ENCODE measurements at regions of chr1 and their contacts with region 1.

Region 1: DNA sequence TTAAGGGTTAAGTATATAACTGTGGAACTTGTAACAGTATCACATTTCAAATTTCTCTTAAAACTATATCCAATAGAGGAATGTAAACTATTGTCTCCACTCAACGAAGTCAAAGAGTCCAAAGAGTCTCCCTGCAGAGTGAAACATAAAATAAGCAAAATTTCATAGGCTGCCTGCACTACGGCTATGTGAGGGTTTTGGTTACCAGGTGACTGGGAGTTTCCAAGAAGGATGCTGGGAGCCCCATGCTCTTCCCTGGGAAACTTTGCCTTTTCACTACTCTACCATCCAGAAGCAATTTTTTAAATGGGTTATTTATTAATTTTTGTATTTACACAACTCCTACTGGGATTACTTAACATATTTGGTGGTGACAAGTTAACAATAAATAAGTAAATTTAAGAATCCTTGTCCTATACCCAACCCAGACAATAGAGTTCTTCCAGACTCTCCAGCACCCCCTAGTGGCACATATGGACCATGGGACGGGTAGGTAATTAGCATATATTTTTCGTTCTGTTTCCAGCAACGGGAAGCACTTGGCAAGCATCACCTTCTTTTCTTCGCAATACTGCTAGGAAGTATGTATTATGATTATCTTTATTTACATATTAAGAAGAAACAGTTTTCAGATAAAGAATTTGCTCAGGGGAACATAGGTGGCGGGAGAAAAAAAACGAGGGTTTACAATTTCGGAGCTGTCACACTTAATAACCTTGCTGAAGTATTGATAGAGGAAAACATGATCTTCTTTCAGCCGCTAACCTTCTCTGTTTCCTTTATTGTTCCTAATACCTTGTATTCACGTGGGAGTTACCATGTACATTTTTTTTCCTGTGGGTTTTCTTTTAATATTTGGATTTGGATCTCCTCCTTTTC is 3.5 kb downstream of the FMO2 start:
- DNase-seq: peak in 4 of 5 donors; percentile 56 to 66 (median 64)
- ATAC-seq: peak in 3 of 4 donors; percentile 74 to 80 (median 76)
- H3K4me3 ChIP-seq: peak overlapping the region; percentile 4 to 67 (median 50)
- H3K27ac ChIP-seq: peak overlapping the region in 11 of 12 donors; percentile 35 to 88 (median 75)
- H3K4me1 ChIP-seq: peaks cover 0 to 35% (median 3%) of the 10 kb centered on the region in 12 donors
- H3K27me3 ChIP-seq: no peaks in the 10 kb centered on the region
- CTCF ChIP-seq: peak; percentile 81 to 95 (median 89)
- POLR2A ChIP-seq: no peak

Region 2: DNA sequence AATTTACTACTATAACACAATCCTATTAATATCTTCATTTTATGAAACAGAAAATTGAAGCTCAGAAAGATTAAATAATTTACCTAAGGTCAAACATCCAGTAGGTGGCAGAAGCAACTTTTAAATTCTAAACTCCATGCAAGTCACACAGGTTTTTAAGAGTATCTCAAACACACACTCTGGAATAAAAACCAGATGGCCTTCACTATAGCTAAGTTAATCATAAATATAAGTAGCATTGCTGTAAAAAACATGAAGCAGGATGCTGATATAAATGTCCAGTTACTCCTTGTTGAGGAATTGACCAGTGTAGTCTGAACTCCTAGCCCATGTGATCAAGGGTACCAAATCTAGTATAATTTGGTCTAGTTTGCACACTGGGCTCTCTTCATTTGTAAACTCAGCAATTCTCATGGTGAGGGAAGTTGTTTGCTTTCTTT is 107.3 kb before region 1 on chr1:
- intact Hi-C with region 1: loop called (anchors 1 to 10 kb)
- DNase-seq: no peak
- ATAC-seq: peak in 2 of 4 donors; percentile 46 to 50
- H3K4me3 ChIP-seq: peak overlapping the region in 1 of 12 donors; percentile 4
- H3K27ac ChIP-seq: peak overlapping the region in 9 of 12 donors; percentile 13 to 76 (median 51)
- H3K4me1 ChIP-seq: peaks cover 0 to 29% (median 9%) of the 10 kb centered on the region in 12 donors
- H3K27me3 ChIP-seq: no peaks in the 10 kb centered on the region
- CTCF ChIP-seq: peak; percentile 36 to 71 (median 62)
- POLR2A ChIP-seq: no peak

Region 3: GRCh38 chr1:171110621-171111326 is 77.9 kb before region 1 on chr1:
- intact Hi-C with region 1: loop called in 2 of 10 experiments (anchors 5 kb)
- DNase-seq: no peak
- ATAC-seq: peak in 3 of 4 donors; percentile 53 to 73 (median 58)
- H3K4me3 ChIP-seq: no peak overlapping the region
- H3K27ac ChIP-seq: peak overlapping the region; percentile 9 to 80 (median 56)
- H3K4me1 ChIP-seq: peaks cover 0 to 37% (median 5%) of the 10 kb centered on the region in 12 donors
- H3K27me3 ChIP-seq: no peaks in the 10 kb centered on the region
- CTCF ChIP-seq: no peak
- POLR2A ChIP-seq: no peak

Region 4: GRCh38 chr1:171122893-171123292 is 65.7 kb before region 1 on chr1:
- intact Hi-C with region 1: loop called in 1 of 10 experiments (anchors 5 kb)
- DNase-seq: no peak
- ATAC-seq: peak in 3 of 4 donors; percentile 53 to 69 (median 67)
- H3K4me3 ChIP-seq: no peak overlapping the region
- H3K27ac ChIP-seq: peak overlapping the region in 8 of 12 donors; percentile 0 to 74 (median 48)
- H3K4me1 ChIP-seq: peaks cover 0 to 42% (median 18%) of the 10 kb centered on the region in 12 donors
- H3K27me3 ChIP-seq: no peaks in the 10 kb centered on the region
- CTCF ChIP-seq: no peak
- POLR2A ChIP-seq: no peak

Region 5: DNA sequence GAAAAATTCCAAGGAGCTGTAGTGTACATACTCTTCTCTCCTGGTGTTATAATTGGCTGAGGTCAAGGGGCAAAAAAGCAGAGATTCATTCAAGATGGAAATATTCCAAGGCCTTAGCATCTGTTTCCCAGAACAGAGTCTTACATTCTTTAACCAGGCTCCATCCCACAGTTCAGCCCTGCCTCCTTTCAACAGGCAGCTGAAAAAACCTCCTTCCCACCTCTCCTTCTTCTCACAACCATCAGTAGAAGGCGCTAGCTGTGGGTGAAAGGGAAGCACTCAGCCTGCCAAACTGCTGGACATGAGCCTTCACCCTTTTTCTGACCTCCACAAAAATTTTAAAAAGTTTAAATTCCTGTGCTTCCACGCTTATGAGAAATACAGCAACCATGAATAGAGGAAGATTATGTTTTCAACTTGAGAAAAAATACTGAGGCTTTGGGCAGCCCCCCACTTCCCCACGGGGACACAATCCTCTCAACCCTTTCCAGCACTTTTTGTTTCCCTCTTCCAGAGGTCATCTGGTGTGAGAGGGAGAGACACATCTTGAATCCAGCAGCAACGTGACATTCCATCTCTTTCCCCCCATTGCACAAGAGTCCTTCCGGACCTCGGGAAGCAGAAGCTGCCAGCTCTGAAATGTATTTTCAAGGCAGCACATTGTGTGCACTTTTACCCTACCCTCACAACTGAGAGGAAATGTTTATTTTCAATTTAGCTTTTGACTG is 46.8 kb before region 1 on chr1:
- intact Hi-C with region 1: loop called in 8 of 10 experiments (anchors 1 to 5 kb)
- DNase-seq: peak; percentile 51 to 74 (median 65)
- ATAC-seq: peak; percentile 76 to 89 (median 84)
- H3K4me3 ChIP-seq: peak overlapping the region in 4 of 12 donors; percentile 1 to 22 (median 18)
- H3K27ac ChIP-seq: peak overlapping the region; percentile 79 to 94 (median 86)
- H3K4me1 ChIP-seq: peaks cover 0 to 75% (median 49%) of the 10 kb centered on the region in 12 donors
- H3K27me3 ChIP-seq: no peaks in the 10 kb centered on the region
- CTCF ChIP-seq: peak in 7 of 12 donors; percentile 21 to 54 (median 39)
- POLR2A ChIP-seq: no peak

Region 6: GRCh38 chr1:171210355-171210754 is 21.7 kb after region 1 on chr1:
- intact Hi-C with region 1: loop called in 1 of 10 experiments (anchors 2 kb)
- DNase-seq: peak in 1 of 5 donors; percentile 25
- ATAC-seq: peak; percentile 60 to 84 (median 84)
- H3K4me3 ChIP-seq: no peak overlapping the region
- H3K27ac ChIP-seq: peak overlapping the region in 9 of 12 donors; percentile 2 to 59 (median 13)
- H3K4me1 ChIP-seq: peaks cover 0 to 39% (median 20%) of the 10 kb centered on the region in 12 donors
- H3K27me3 ChIP-seq: no peaks in the 10 kb centered on the region
- CTCF ChIP-seq: no peak
- POLR2A ChIP-seq: no peak

Region 7: DNA sequence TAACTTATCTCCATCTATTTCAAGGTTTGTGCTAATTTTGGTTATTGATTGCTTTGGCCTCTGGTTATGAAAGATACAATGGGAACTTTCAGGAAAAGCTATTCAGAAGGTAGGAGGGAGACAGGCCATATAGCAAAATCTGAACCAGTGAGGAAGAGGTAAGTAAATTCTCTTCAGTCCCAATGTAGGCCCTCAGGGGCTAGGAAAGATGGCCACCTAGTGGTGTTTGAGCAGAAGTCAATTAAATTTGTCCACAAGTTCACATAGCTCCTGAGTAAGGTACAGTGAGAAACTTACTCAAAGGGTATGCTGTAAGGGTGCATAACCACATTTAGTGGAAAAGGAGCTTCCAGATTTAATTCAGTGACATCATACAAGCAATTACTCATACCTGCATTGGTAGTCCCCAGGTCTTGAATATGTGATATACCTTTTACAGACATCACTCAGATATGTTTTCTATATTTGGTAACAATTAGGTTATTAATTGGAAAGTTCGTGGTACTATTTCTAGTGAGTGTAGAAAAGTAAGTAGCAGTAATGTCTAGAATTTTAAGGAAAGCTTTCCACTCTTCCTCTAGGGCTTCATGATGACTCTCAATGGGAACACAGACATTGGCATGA is 38.2 kb after region 1 on chr1:
- intact Hi-C with region 1: loop called in 6 of 10 experiments (anchors 2 to 5 kb)
- DNase-seq: peak in 4 of 5 donors; percentile 34 to 49 (median 40)
- ATAC-seq: peak in 3 of 4 donors; percentile 76 to 81 (median 78)
- H3K4me3 ChIP-seq: no peak overlapping the region
- H3K27ac ChIP-seq: no peak overlapping the region
- H3K4me1 ChIP-seq: peaks cover 0 to 25% (median 12%) of the 10 kb centered on the region in 12 donors
- H3K27me3 ChIP-seq: no peaks in the 10 kb centered on the region
- CTCF ChIP-seq: peak; percentile 75 to 94 (median 82)
- POLR2A ChIP-seq: no peak

Region 8: DNA sequence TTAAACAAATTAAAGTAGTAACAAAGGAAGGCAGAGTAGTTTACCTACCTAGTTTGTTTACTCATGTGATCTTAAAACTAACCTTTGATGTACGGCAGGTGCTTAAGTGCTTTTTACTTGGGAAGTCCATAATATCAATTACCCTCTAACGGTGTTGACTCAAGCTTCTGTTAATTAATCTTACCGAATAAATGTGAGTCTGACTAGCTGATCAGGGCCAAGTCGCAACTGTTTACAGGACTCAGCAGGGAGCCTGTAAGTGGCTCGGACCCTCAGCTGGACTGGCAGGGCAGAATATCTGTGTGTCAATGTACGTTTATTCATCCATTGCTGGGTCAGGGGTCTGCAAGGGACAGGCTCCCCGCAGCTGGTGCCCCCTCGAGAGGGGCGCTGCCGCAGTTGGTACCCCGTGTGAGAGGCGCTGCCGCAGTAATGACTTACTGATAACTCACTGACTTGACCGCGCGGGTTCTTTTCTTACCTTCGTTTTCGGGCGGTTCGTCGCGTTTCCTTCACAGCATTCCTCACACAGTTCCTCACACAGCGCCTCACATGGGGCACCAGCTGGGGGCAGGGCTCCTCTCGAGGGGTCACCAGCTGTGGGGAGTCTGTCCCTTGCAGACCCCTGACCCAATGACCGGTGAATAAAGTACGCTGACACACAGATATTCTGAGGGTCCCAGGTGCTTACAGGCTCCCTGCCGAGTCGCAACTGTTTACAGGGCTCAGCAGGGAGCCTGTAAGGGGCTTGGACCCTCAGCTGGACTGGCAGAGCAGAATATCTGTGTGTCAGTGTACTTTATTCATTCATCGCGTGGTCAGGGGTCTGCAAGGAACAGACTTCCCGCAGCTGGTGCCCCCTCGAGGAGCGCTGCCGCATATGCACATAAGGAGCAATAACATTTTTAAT is 62.7 kb after region 1 on chr1:
- intact Hi-C with region 1: no loop called
- DNase-seq: peak in 1 of 5 donors; percentile 43
- ATAC-seq: peak in 3 of 4 donors; percentile 37 to 62 (median 48)
- H3K4me3 ChIP-seq: peak overlapping the region in 11 of 12 donors; percentile 33 to 68 (median 60)
- H3K27ac ChIP-seq: peak overlapping the region in 1 of 12 donors; percentile 32
- H3K4me1 ChIP-seq: peaks cover 0 to 7% (median 0%) of the 10 kb centered on the region in 12 donors
- H3K27me3 ChIP-seq: peaks cover 0 to 20% (median 3%) of the 10 kb centered on the region in 9 donors
- CTCF ChIP-seq: peak; percentile 16 to 70 (median 46)
- POLR2A ChIP-seq: no peak